A549 (cell line): ENCODE measurements at regions of chr2 and their contacts with region 1.

Region 1: GRCh38 chr2:162243294-162243693 is at the start of gene FAP:
- DNase-seq: no peak
- ATAC-seq: no peak
- H3K4me3 ChIP-seq: no peak within 1 kb of the TSS
- H3K27ac ChIP-seq: no peak within 1 kb of the TSS; a peak in 1 of 6 replicates
- H3K4me1 ChIP-seq: peaks cover 6% of the 10 kb centered on the region; the same call in 2 of the 3 replicates
- CTCF ChIP-seq: no peak
- EP300 ChIP-seq: no peak
- POLR2A ChIP-seq: no peak
- RAD21 ChIP-seq: no peak
- polyA plus RNA-seq, gene FAP: 0.16 TPM in 1 of 2 replicates, not detected in the other

Region 2: GRCh38 chr2:162221064-162221463 is 22.2 kb before region 1 on chr2:
- CTCF ChIA-PET with region 1: interaction called, 16 read pairs
- POLR2A ChIA-PET with region 1: no interaction called
- DNase-seq: peak; percentile 35 to 63
- ATAC-seq: peak; percentile 81 to 97
- H3K4me3 ChIP-seq: no peak overlapping the region
- H3K27ac ChIP-seq: no peak overlapping the region
- H3K4me1 ChIP-seq: no peaks in the 10 kb centered on the region
- CTCF ChIP-seq: peak; percentile 73
- EP300 ChIP-seq: no peak
- POLR2A ChIP-seq: no peak
- RAD21 ChIP-seq: peak; percentile 64 to 70

Region 3: GRCh38 chr2:162258686-162259085 is 15.4 kb after region 1 on chr2:
- CTCF ChIA-PET with region 1: no interaction called
- POLR2A ChIA-PET with region 1: no interaction called
- DNase-seq: no peak
- ATAC-seq: no peak
- H3K4me3 ChIP-seq: no peak overlapping the region
- H3K27ac ChIP-seq: no peak overlapping the region
- H3K4me1 ChIP-seq: no peaks in the 10 kb centered on the region
- CTCF ChIP-seq: no peak
- EP300 ChIP-seq: no peak
- POLR2A ChIP-seq: no peak
- RAD21 ChIP-seq: no peak

Region 4: DNA sequence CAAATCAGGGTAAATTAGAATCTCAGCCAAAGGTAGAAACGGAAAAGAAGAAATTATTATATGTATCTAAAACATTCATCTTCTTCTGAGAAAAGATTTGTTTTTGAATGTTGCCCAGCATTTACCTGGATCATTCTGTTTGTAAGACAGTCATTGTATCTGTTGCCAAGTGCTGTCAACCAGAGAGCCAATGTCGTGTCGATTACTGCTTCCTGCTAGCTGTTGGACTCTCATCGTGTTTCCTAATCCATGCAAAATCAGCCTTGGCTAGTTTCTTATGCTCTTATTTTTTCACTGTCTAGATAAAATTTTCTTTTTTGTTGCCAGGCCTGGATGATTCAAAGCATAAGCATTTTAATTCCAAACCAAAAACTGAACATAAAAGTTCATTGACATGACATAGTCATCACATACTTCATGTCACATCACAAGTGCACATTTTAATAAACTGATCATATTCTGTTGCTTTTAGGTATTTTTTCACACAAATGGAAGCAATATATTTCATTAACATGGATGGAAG is 393.0 kb after region 1 on chr2:
- CTCF ChIA-PET with region 1: no interaction called
- POLR2A ChIA-PET with region 1: no interaction called
- DNase-seq: no peak
- ATAC-seq: no peak
- H3K4me3 ChIP-seq: no peak overlapping the region
- H3K27ac ChIP-seq: no peak overlapping the region
- H3K4me1 ChIP-seq: no peaks in the 10 kb centered on the region
- CTCF ChIP-seq: no peak
- EP300 ChIP-seq: no peak
- POLR2A ChIP-seq: no peak
- RAD21 ChIP-seq: no peak